CD4-positive, alpha-beta memory T cell (primary cell): ENCODE measurements at regions of chr1 and their contacts with region 1.

Region 1: GRCh38 chr1:226424228-226425003 is 16.5 kb upstream of the PARP1 start:
- DNase-seq: peak in 4 of 5 donors; percentile 13 to 38 (median 34)
- H3K4me3 ChIP-seq: no peak overlapping the region
- H3K4me3 Mint-ChIP-seq: peak overlapping the region in 2 of 8 donors; percentile 22 to 42
- H3K27ac ChIP-seq: no peak overlapping the region
- H3K27ac Mint-ChIP-seq: no peak overlapping the region
- H3K4me1 ChIP-seq: peaks cover 17% of the 10 kb centered on the region
- H3K4me1 Mint-ChIP-seq: peaks cover 7 to 18% (median 9%) of the 10 kb centered on the region in 4 donors
- H3K27me3 ChIP-seq: no peaks in the 10 kb centered on the region
- H3K27me3 Mint-ChIP-seq: peaks cover 1 to 3% of the 10 kb centered on the region in 2 donors

Region 2: GRCh38 chr1:226293553-226293920 is 130.9 kb before region 1 on chr1:
- CTCF ChIA-PET with region 1: no interaction called
- POLR2A ChIA-PET with region 1: no interaction called
- intact Hi-C with region 1: no loop called
- DNase-seq: no peak
- H3K4me3 ChIP-seq: no peak overlapping the region
- H3K4me3 Mint-ChIP-seq: no peak overlapping the region
- H3K27ac ChIP-seq: no peak overlapping the region
- H3K27ac Mint-ChIP-seq: no peak overlapping the region
- H3K4me1 ChIP-seq: no peaks in the 10 kb centered on the region
- H3K4me1 Mint-ChIP-seq: no peaks in the 10 kb centered on the region
- H3K27me3 ChIP-seq: no peaks in the 10 kb centered on the region
- H3K27me3 Mint-ChIP-seq: no peaks in the 10 kb centered on the region

Region 3: GRCh38 chr1:226444901-226445300 is 20.5 kb after region 1 on chr1:
- CTCF ChIA-PET with region 1: interaction called, 82 read pairs
- POLR2A ChIA-PET with region 1: interaction called, 26 read pairs
- intact Hi-C with region 1: loop called (anchors 1 kb)
- DNase-seq: peak; percentile 77 to 82 (median 78)
- H3K4me3 ChIP-seq: no peak overlapping the region
- H3K4me3 Mint-ChIP-seq: peak overlapping the region; percentile 33 to 75 (median 61)
- H3K27ac ChIP-seq: no peak overlapping the region
- H3K27ac Mint-ChIP-seq: peak overlapping the region; percentile 55 to 91 (median 82)
- H3K4me1 ChIP-seq: peaks cover 29% of the 10 kb centered on the region
- H3K4me1 Mint-ChIP-seq: peaks cover 21 to 34% (median 26%) of the 10 kb centered on the region in 4 donors
- H3K27me3 ChIP-seq: no peaks in the 10 kb centered on the region
- H3K27me3 Mint-ChIP-seq: no peaks in the 10 kb centered on the region

Region 4: DNA sequence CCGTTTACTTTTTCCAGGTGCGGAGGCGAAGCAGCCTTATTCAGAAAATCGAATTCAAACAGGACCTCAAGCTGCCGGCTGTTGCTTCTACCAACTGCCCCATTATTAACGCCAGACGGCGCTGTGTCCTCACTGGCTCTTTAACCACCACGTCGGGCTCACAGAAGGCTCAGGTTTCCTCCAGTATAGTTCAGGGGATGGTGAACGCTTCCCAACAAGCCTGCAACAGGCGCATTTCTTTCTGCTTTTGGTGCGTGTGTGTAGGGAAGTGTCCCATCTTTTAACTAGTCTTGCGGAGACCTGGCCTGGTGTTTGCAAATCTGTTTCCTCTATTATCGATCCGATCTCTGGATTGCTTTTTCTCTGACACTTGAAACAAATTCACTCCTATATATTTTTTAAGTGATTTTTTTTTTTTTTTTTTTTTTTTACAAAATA is 123.4 kb after region 1 on chr1:
- CTCF ChIA-PET with region 1: interaction called, 8 read pairs
- POLR2A ChIA-PET with region 1: interaction called, 8 read pairs
- intact Hi-C with region 1: loop called (anchors 1 kb)
- DNase-seq: peak; percentile 49 to 63 (median 56)
- H3K4me3 ChIP-seq: peak overlapping the region in 1 of 2 donors; percentile 28
- H3K4me3 Mint-ChIP-seq: peak overlapping the region in 6 of 8 donors; percentile 33 to 71 (median 56)
- H3K27ac ChIP-seq: no peak overlapping the region
- H3K27ac Mint-ChIP-seq: no peak overlapping the region
- H3K4me1 ChIP-seq: peaks cover 22% of the 10 kb centered on the region
- H3K4me1 Mint-ChIP-seq: peaks cover 10 to 21% (median 14%) of the 10 kb centered on the region in 4 donors
- H3K27me3 ChIP-seq: peaks cover 17% of the 10 kb centered on the region
- H3K27me3 Mint-ChIP-seq: peaks cover 23 to 33% of the 10 kb centered on the region in 2 donors

Region 5: DNA sequence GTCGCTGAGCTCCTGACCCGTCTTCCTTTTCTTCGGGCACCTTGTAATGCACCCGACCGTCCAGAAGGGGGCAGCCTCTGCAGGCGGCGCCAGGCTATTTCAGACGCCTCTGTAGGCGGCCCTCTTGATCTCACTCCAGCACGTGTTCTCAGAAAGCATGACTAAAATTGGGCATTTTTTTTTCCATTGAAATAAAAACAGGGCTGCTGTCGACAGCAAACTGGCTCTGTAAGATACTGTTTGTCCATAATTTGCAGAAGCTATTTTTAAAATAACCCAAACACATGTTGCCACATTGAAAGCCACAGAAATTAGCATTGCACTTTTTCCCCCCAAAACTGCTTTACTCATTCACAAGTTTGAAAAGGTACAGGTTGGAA is 202.2 kb after region 1 on chr1:
- CTCF ChIA-PET with region 1: interaction called, 8 read pairs
- POLR2A ChIA-PET with region 1: no interaction called
- intact Hi-C with region 1: loop called (anchors 5 kb)
- DNase-seq: peak; percentile 71 to 79 (median 74)
- H3K4me3 ChIP-seq: no peak overlapping the region
- H3K4me3 Mint-ChIP-seq: peak overlapping the region; percentile 34 to 84 (median 61)
- H3K27ac ChIP-seq: no peak overlapping the region
- H3K27ac Mint-ChIP-seq: peak overlapping the region in 6 of 7 donors; percentile 12 to 89 (median 64)
- H3K4me1 ChIP-seq: peaks cover 11% of the 10 kb centered on the region
- H3K4me1 Mint-ChIP-seq: peaks cover 11 to 31% (median 22%) of the 10 kb centered on the region in 4 donors
- H3K27me3 ChIP-seq: no peaks in the 10 kb centered on the region
- H3K27me3 Mint-ChIP-seq: peaks cover 0 to 2% of the 10 kb centered on the region in 2 donors